ENCODE measurements at regions of chr13 and their contacts with region 1.

Region 1: DNA sequence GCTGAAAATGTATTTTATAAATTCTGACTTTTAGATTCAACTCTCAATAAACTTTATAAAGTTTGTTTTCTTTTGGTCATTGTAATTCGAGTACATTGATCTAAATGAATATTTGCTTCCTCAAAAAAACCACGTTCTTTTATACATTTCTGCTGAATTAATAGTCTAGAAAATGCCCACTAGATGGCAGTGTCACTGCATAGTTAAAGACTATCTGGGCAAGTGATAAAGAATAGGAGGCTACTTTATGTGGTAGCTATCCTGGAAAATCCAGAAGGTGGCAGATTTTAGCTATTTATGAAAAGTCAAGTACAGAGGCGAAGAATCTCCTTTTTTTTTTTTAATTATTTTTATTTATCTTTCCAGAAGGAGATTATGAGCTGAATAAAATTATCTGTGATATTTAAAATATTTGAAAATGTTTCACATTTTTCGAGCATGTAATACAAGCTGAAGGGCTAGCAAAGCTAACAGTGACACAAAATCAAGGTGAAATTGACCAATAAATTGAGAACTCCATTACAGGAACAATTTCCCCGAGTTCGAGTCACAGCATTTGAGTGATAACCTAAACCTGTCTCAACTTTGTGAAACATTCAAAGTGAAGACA is 221.8 kb downstream of the OLFM4 start:
- DNase-seq: no peak
- H3K4me3 Mint-ChIP-seq: no peak overlapping the region
- H3K27ac Mint-ChIP-seq: no peak overlapping the region
- H3K4me1 Mint-ChIP-seq: no peaks in the 10 kb centered on the region
- H3K27me3 Mint-ChIP-seq: no peaks in the 10 kb centered on the region

Region 2: GRCh38 chr13:52933547-52934210 is 316.7 kb before region 1 on chr13:
- CTCF ChIA-PET with region 1: no interaction called
- POLR2A ChIA-PET with region 1: no interaction called
- DNase-seq: no peak
- H3K4me3 Mint-ChIP-seq: no peak overlapping the region
- H3K27ac Mint-ChIP-seq: no peak overlapping the region
- H3K4me1 Mint-ChIP-seq: no peaks in the 10 kb centered on the region
- H3K27me3 Mint-ChIP-seq: no peaks in the 10 kb centered on the region

Region 3: GRCh38 chr13:53167561-53167960 is 82.8 kb before region 1 on chr13:
- CTCF ChIA-PET with region 1: no interaction called
- POLR2A ChIA-PET with region 1: no interaction called
- DNase-seq: no peak
- H3K4me3 Mint-ChIP-seq: no peak overlapping the region
- H3K27ac Mint-ChIP-seq: no peak overlapping the region
- H3K4me1 Mint-ChIP-seq: no peaks in the 10 kb centered on the region
- H3K27me3 Mint-ChIP-seq: no peaks in the 10 kb centered on the region

Region 4: GRCh38 chr13:53264751-53265385 is 14.5 kb after region 1 on chr13:
- CTCF ChIA-PET with region 1: interaction called, 10 read pairs
- POLR2A ChIA-PET with region 1: no interaction called
- DNase-seq: no peak
- H3K4me3 Mint-ChIP-seq: no peak overlapping the region
- H3K27ac Mint-ChIP-seq: no peak overlapping the region
- H3K4me1 Mint-ChIP-seq: no peaks in the 10 kb centered on the region
- H3K27me3 Mint-ChIP-seq: no peaks in the 10 kb centered on the region

Region 5: DNA sequence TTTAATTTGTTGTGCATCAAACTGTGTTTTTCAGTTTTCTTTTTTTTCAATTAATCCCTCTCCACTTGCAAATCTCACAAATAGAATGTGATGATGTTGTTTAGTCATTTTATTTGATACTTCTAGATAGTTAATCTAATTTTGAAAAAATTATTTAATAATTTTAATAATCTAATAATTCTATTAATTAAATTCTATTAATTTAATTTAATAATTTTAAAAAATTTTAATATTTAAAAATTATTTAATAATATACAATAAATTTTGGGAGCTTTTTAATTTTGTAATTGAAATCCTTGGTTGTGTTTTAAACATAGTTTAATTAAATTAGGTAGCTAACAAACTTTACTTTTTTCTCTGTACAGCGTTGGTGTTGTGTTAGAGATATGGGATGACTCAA is 172.0 kb after region 1 on chr13:
- CTCF ChIA-PET with region 1: no interaction called
- POLR2A ChIA-PET with region 1: no interaction called
- DNase-seq: no peak
- H3K4me3 Mint-ChIP-seq: no peak overlapping the region
- H3K27ac Mint-ChIP-seq: no peak overlapping the region
- H3K4me1 Mint-ChIP-seq: no peaks in the 10 kb centered on the region
- H3K27me3 Mint-ChIP-seq: no peaks in the 10 kb centered on the region